CD14-positive monocyte (primary cell): ENCODE measurements at regions of chr2 and their contacts with region 1.

Region 1: GRCh38 chr2:68282811-68283418 is 30.6 kb upstream of the PPP3R1 start:
- DNase-seq: peak; percentile 21 to 53 (median 49)
- H3K4me3 ChIP-seq: no peak overlapping the region
- H3K4me3 Mint-ChIP-seq: no peak overlapping the region
- H3K27ac ChIP-seq: no peak overlapping the region
- H3K27ac Mint-ChIP-seq: no peak overlapping the region
- H3K4me1 ChIP-seq: peaks cover 6 to 8% of the 10 kb centered on the region in 2 donors
- H3K4me1 Mint-ChIP-seq: peaks cover 9% of the 10 kb centered on the region
- H3K27me3 ChIP-seq: no peaks in the 10 kb centered on the region
- H3K27me3 Mint-ChIP-seq: peaks cover 0 to 5% (median 0%) of the 10 kb centered on the region in 3 donors
- CTCF ChIP-seq: peak; percentile 88

Region 2: DNA sequence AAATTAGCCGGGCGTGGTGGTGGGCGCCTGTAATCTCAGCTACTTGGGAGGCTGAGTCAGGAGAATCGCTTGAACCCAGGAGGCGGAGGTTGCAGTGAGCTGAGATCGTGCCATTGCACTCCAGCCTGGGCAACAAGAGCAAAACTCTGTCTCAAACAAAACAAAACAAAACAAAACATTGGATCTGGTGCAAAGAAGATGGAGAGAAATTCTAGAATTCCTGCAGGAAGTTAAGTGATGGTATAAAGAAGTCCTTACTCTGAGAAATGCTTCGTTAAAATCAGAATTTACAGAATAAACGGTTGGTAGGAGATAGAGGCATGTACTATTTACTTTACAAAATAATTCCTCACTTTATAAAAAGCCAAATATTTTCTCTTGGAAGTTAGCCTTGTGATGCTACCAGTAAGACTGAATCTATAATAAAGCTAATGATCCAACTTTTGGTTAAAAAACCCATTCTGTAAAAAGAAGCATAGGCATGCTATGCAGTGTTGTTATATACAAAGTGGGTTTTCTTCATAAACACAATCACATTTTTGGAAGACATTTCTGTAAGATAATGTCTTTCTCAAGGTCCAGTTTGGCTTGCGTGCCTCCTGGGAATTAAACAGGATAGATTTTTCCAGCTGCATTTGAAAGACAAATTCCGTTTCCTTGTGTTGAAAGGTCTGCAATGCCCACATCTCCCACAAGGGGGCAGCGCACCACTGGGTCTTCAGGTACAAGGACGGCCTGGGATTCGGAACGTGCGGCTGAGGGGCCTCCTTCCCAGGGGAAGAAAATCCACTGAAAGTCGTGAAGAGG is 160.8 kb before region 1 on chr2:
- intact Hi-C with region 1: loop called (anchors 5 to 10 kb)
- DNase-seq: peak; percentile 57 to 70 (median 70)
- H3K4me3 ChIP-seq: peak overlapping the region in 1 of 3 experiments; percentile 5
- H3K4me3 Mint-ChIP-seq: peak overlapping the region in 1 of 2 donors; percentile 51
- H3K27ac ChIP-seq: no peak overlapping the region
- H3K27ac Mint-ChIP-seq: peak overlapping the region in 3 of 7 donors; percentile 2 to 68 (median 17)
- H3K4me1 ChIP-seq: peaks cover 2 to 6% of the 10 kb centered on the region in 2 donors
- H3K4me1 Mint-ChIP-seq: peaks cover 34% of the 10 kb centered on the region
- H3K27me3 ChIP-seq: no peaks in the 10 kb centered on the region
- H3K27me3 Mint-ChIP-seq: peaks cover 0 to 6% (median 0%) of the 10 kb centered on the region in 3 donors
- CTCF ChIP-seq: peak; percentile 98

Region 3: DNA sequence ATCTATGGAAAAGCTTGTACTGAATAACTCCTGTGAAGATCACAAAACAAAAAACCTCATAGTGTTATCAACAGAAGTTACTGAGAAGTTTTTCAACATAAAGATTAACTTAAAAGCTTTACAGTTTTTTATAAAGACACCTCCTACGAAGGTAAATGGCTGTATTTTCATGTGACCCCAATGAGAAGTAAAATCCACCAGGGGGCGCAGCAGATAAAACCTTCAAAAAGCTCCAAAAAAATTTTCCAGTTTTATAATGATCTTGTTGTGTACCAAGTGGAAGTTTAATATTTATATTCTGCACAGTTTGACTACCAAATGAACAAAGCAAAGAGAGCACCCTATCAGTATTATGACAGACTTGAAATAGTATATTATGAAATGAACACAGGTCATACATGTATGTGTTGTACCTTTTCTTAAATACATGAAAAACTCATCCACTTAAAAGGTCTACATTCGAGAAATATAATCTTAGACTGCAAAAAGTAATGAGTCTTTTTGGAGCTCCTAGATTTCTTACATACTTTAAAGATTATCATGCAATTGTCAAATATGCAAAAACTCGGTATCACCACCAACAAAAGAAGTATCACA is 86.7 kb before region 1 on chr2:
- intact Hi-C with region 1: loop called in 1 of 2 experiments (anchors 10 kb)
- DNase-seq: peak; percentile 30 to 33 (median 31)
- H3K4me3 ChIP-seq: no peak overlapping the region
- H3K4me3 Mint-ChIP-seq: no peak overlapping the region
- H3K27ac ChIP-seq: no peak overlapping the region
- H3K27ac Mint-ChIP-seq: peak overlapping the region in 2 of 7 donors; percentile 15 to 54
- H3K4me1 ChIP-seq: peaks cover 10 to 24% of the 10 kb centered on the region in 2 donors
- H3K4me1 Mint-ChIP-seq: peaks cover 36% of the 10 kb centered on the region
- H3K27me3 ChIP-seq: no peaks in the 10 kb centered on the region
- H3K27me3 Mint-ChIP-seq: no peaks in the 10 kb centered on the region
- CTCF ChIP-seq: peak; percentile 96

Region 4: GRCh38 chr2:68238955-68239822 is 43.7 kb before region 1 on chr2:
- intact Hi-C with region 1: loop called in 1 of 2 experiments (anchors 10 kb)
- DNase-seq: peak in 2 of 3 donors; percentile 54 to 62
- H3K4me3 ChIP-seq: peak overlapping the region in 1 of 3 experiments; percentile 10
- H3K4me3 Mint-ChIP-seq: peak overlapping the region in 1 of 2 donors; percentile 28
- H3K27ac ChIP-seq: peak overlapping the region in 1 of 2 donors; percentile 57
- H3K27ac Mint-ChIP-seq: peak overlapping the region; percentile 11 to 86 (median 80)
- H3K4me1 ChIP-seq: peaks cover 38 to 52% of the 10 kb centered on the region in 2 donors
- H3K4me1 Mint-ChIP-seq: peaks cover 59% of the 10 kb centered on the region
- H3K27me3 ChIP-seq: no peaks in the 10 kb centered on the region
- H3K27me3 Mint-ChIP-seq: no peaks in the 10 kb centered on the region
- CTCF ChIP-seq: no peak

Region 5: GRCh38 chr2:68441179-68441993 is 158.5 kb after region 1 on chr2:
- intact Hi-C with region 1: loop called in 1 of 2 experiments (anchors 10 kb)
- DNase-seq: peak; percentile 93 to 99 (median 97)
- H3K4me3 ChIP-seq: peak overlapping the region in 1 of 3 experiments; percentile 28
- H3K4me3 Mint-ChIP-seq: peak overlapping the region in 1 of 2 donors; percentile 26
- H3K27ac ChIP-seq: peak overlapping the region; percentile 39 to 69
- H3K27ac Mint-ChIP-seq: peak overlapping the region; percentile 85 to 95 (median 93)
- H3K4me1 ChIP-seq: peaks cover 25 to 26% of the 10 kb centered on the region in 2 donors
- H3K4me1 Mint-ChIP-seq: peaks cover 30% of the 10 kb centered on the region
- H3K27me3 ChIP-seq: no peaks in the 10 kb centered on the region
- H3K27me3 Mint-ChIP-seq: no peaks in the 10 kb centered on the region
- CTCF ChIP-seq: peak; percentile 90

Region 6: DNA sequence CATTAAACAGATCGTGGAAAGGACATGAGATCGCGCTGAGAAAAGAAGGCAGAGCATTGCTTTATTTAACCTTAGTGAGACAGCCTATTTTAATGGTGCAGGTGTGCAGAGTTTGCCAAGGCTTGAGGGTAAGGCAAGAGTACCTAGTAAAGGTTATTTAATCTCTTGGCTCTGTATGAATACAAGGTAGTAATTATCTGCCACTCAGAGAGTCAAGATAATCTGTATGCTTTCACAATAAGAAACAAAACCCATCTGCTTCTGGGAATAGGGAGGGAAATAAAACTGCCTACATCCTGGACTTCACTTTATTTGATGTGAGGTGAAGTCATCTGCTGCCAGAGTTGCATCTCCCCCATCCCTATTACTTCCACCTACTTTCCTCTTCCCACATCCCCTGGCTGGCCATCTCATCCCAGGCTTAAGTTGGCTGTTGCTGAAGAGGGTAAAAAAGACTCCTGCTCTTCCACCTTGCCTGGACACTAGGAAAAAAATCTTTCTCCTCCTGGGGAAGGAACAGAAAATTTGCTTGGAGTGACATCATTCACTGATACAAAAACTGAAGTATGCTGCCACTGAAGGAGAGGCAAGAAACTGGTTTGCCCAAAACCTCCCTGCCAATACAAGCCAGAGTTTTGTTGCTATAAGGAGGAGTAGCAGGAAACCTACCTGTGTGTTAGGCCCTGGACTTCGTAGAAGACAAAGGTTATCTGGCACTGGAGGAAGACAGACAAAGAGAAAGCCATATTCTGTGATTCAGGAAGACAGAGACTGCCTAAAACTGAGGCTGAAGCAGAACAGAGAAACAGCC is 415.9 kb after region 1 on chr2:
- intact Hi-C with region 1: no loop called
- DNase-seq: no peak
- H3K4me3 ChIP-seq: no peak overlapping the region
- H3K4me3 Mint-ChIP-seq: no peak overlapping the region
- H3K27ac ChIP-seq: no peak overlapping the region
- H3K27ac Mint-ChIP-seq: peak overlapping the region in 1 of 7 donors; percentile 11
- H3K4me1 ChIP-seq: peaks cover 28 to 35% of the 10 kb centered on the region in 2 donors
- H3K4me1 Mint-ChIP-seq: peaks cover 38% of the 10 kb centered on the region
- H3K27me3 ChIP-seq: no peaks in the 10 kb centered on the region
- H3K27me3 Mint-ChIP-seq: peaks cover 0 to 4% (median 0%) of the 10 kb centered on the region in 3 donors
- CTCF ChIP-seq: no peak